ENCODE measurements at regions of chr11 and their contacts with region 1.

Region 1: DNA sequence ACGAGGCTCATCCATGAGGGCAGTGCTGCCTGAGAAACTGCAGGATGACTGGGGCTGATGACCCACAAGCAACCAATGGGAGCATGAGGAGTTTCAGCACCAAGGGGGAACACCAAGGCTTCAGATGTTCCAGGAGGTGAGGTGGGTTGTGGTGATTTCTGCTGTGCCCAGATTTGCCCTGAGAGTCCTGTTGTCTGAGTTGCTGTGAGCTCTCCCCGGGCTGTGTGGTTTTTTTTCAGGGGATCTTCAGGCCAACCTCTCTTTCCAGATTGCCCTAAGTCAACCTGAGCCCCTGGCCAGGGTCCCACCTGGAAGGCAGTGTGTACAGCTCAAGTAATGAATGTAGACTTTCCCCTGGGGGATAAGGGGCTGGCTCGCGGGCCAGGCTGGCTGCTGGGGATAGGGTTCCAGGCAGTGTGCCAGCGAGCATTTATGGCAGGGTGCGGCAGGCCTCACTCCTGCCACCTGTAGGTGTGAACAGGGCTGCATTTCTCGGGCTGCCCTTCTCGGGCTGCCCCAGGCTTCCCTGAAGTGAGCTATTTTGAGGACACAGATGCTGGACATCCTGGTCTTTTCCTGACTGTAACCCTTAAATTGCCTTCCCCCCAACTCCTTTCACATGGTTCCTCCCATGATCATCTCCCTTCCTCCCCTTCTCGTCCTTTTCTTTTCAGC is 9.8 kb downstream of the SLC22A6 start:
- H3K4me3 ChIP-seq: no peak overlapping the region
- H3K27ac ChIP-seq: no peak overlapping the region
- H3K4me1 ChIP-seq: no peaks in the 10 kb centered on the region
- CTCF ChIP-seq: peak; percentile 74; the same call in 1 of the 2 replicates

Region 2: DNA sequence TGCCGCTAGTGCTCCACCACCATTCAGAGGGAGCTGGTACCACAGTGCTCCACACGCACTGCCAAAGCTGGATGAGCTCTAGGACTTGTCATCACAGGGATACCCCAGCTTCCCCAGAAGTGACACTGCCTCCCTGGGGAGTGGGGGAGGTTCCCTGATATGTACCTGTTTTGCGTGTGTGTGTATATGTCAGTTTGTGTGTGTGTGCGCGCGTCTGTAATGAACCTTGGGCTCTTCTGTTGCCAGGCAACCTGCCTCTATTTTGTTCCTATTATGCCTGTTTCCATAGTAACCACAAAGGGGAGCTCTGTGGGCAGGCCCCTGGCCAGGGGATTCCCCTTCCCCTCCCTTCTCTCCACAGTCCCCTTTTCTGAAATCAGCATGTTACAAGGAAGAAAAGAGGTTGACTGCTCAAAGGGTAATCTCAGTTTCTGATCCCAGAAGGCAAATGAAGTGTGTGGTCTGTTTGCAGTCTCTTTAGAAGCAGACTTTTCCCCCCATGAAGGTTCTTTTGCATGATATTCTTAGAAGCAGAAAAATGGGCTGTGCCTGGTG is 423.2 kb before region 1 on chr11:
- CTCF ChIA-PET with region 1: no interaction called
- POLR2A ChIA-PET with region 1: no interaction called
- H3K4me3 ChIP-seq: no peak overlapping the region
- H3K27ac ChIP-seq: no peak overlapping the region
- H3K4me1 ChIP-seq: peaks cover 2% of the 10 kb centered on the region; the same call in 1 of the 2 replicates
- CTCF ChIP-seq: no peak

Region 3: DNA sequence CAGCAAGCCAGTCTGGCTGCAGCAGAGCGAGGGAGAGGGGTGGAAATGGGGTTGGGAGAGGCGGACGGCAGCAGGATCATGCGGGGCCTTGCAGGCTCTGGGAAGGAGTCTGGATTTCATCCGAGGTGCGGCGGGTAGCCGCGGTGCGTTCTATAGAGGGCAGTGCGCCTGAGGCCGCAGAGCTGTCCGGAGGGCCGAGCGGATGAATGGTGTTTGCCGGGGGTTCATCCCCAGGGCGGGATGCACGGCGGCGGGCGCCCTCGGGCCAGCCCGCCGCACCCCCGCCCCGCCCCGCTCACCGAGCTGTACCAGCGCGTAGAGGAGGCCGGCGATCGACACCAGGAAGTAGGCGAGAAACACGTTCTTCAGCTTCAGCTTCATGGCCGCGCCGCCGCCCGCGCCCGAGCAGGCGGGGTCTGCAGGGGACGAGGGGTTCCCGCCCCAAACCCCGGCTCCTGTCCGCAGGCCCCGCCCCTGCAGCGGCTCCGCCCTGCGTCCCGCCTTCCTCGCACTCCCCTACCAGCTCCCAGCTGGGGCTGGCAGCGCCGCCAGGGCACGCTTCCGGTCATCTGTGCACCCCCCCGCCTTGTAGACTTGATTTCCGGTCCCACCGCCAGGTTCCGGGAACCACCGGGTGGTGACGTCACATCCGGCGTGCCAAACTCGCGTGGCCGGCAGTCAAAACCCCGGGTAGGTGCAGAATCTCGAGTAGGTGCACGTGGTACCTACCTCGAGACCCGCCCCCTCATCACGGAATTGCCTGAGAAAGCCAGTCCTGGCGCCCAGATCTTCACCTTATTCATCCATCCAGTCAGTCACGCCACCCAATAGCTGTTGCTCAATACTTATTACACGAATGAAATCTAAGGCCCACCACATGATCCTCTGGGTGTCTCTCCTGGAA is 353.2 kb before region 1 on chr11 and contains the start of gene B3GAT3:
- CTCF ChIA-PET with region 1: no interaction called
- POLR2A ChIA-PET with region 1: no interaction called
- H3K4me3 ChIP-seq: peak within 1 kb of the TSS; percentile 71
- H3K27ac ChIP-seq: peak within 1 kb of the TSS; percentile 80
- H3K4me1 ChIP-seq: no peaks in the 10 kb centered on the region
- CTCF ChIP-seq: peak; percentile 5; the same call in 1 of the 2 replicates

Region 4: DNA sequence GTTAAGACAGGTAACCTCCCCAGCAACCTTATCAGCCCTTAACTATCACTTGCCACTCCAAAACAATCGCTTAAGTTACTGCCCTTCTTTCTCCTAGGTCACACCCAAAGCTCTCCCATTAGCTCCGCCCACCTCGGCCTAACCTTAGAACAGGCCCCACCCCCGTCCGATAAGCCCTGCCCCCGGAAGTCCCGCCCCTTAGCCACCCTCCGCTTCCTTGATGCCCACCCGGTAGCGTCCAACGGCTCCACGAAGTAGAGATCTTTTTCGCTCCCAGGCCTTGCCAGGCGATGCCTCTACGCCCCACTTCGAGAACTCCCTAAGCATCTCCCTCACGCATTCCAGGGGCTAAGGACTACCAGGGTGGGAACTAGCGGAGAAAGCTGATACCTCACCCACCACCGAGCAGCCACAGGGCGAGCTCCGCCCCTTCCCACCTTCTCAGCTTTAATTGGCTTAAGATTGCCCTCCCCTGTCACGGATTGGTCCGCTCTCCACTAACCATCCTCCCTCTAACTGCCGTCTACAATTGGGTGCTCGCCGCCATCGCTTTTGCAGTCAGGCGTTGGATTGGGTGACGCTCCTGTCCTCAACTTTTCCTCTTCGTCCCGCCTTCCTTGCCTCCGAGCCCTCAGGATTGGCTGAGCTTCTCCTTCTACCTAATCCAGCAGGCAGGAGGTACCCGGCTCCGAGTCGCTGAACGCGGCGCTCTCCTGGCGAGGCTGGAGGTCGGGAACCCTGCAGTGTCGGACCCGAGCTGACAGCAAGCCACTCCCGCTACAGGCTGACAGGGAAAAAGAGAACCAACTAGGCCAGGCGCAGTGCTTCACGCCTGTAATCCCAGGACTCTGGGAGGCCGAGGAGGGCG is 221.0 kb before region 1 on chr11 and contains the start of gene ZBTB3:
- CTCF ChIA-PET with region 1: no interaction called
- POLR2A ChIA-PET with region 1: no interaction called
- H3K4me3 ChIP-seq: peak within 1 kb of the TSS; percentile 73
- H3K27ac ChIP-seq: peak within 1 kb of the TSS; percentile 32; the same call in 1 of the 2 replicates
- H3K4me1 ChIP-seq: no peaks in the 10 kb centered on the region
- CTCF ChIP-seq: no peak

Region 5: GRCh38 chr11:62931499-62932278 is 43.3 kb before region 1 on chr11:
- CTCF ChIA-PET with region 1: interaction called, 15 read pairs
- POLR2A ChIA-PET with region 1: no interaction called
- H3K4me3 ChIP-seq: no peak overlapping the region
- H3K27ac ChIP-seq: no peak overlapping the region
- H3K4me1 ChIP-seq: no peaks in the 10 kb centered on the region
- CTCF ChIP-seq: no peak

Region 6: DNA sequence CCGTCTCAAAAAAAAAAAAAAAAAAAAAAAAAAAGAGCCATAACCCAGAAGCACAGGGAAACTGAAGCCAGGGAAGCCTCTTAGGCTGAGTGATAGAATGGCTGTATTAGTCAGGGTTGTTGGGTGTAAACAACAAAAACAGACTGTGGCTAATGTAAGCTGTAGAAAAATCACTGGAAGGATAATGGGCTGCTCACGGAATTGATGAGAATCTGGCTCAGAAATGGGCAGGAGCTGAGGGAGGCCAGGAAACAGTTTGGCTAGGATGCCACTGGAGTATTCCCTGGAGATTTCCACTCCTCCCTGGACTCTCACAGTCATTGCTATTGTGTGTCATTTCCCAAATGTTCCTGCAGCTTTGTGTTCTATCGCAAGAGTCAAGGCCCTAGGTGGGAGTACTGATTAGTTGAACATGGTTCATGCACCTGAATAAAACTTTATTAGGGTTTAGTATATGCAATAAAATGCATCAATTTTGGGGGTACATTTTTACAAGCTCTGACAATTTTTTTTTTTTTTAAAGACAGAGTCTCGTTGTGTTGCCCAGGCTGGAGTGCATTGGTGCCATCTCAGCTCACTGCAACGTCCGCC is 12.5 kb before region 1 on chr11:
- CTCF ChIA-PET with region 1: interaction called, 20 read pairs
- POLR2A ChIA-PET with region 1: no interaction called
- H3K4me3 ChIP-seq: no peak overlapping the region
- H3K27ac ChIP-seq: no peak overlapping the region
- H3K4me1 ChIP-seq: no peaks in the 10 kb centered on the region
- CTCF ChIP-seq: no peak

Region 7: GRCh38 chr11:63007920-63008319 is 32.9 kb after region 1 on chr11:
- CTCF ChIA-PET with region 1: interaction called, 12 read pairs
- POLR2A ChIA-PET with region 1: no interaction called
- H3K4me3 ChIP-seq: no peak overlapping the region
- H3K27ac ChIP-seq: no peak overlapping the region
- H3K4me1 ChIP-seq: no peaks in the 10 kb centered on the region
- CTCF ChIP-seq: no peak